Right ventricle myocardium inferior (tissue), 1 donor: ENCODE measurements at regions of chr2 and their contacts with region 1.

Region 1: DNA sequence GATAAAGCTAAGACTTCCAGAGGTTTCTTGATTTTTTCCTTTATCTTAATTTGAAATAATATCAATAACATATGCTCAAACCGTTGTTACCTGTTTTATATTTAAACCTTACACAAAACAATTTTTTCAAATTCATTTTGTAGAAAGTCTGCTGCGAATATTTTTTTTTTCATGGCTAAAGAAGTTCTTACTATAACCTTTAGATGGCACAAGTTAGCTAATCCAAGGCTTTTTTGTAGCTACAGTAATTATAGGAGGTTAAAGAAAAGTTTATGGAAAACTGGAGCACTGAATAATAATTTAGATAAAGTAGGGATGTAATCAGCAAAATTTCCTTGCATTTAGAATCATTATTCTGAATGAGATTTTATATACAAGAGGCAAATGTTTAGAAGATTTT is 78.0 kb upstream of the PNPT1 start:
- DNase-seq: no peak
- ATAC-seq: no peak

Region 2: GRCh38 chr2:55862673-55863390 is 91.2 kb after region 1 on chr2:
- intact Hi-C with region 1: no loop called
- DNase-seq: no peak
- ATAC-seq: peak; percentile 83

Region 3: GRCh38 chr2:55962915-55963314 is 191.3 kb after region 1 on chr2:
- intact Hi-C with region 1: loop called (anchors 2 kb)
- DNase-seq: no peak
- ATAC-seq: no peak